ENCODE measurements at regions of chr7 and their contacts with region 1.

Region 1: GRCh38 chr7:75631711-75632110 is 107.0 kb downstream of the HIP1 start:
- DNase-seq: no peak
- ATAC-seq: no peak
- H3K4me3 ChIP-seq: no peak overlapping the region
- H3K27ac ChIP-seq: no peak overlapping the region
- H3K4me1 ChIP-seq: no peaks in the 10 kb centered on the region
- H3K27me3 ChIP-seq: no peaks in the 10 kb centered on the region
- CTCF ChIP-seq: no peak

Region 2: GRCh38 chr7:75595766-75596165 is 35.9 kb before region 1 on chr7:
- CTCF ChIA-PET with region 1: no interaction called
- POLR2A ChIA-PET with region 1: interaction called, 22 read pairs
- intact Hi-C with region 1: no loop called
- DNase-seq: no peak
- ATAC-seq: no peak
- H3K4me3 ChIP-seq: no peak overlapping the region
- H3K27ac ChIP-seq: no peak overlapping the region
- H3K4me1 ChIP-seq: peaks cover 18% of the 10 kb centered on the region
- H3K27me3 ChIP-seq: no peaks in the 10 kb centered on the region
- CTCF ChIP-seq: no peak

Measured in PC-3 (cell line).